T-cell (primary cell): ENCODE measurements at regions of chr11 and their contacts with region 1.

Region 1: GRCh38 chr11:10878408-10879214 is 20.8 kb upstream of the ZBED5 start:
- DNase-seq: peak in 13 of 35 experiments; percentile 3 to 77 (median 21)
- ATAC-seq: peak; percentile 74 to 81 (median 78)
- H3K4me3 ChIP-seq: no peak overlapping the region
- H3K4me3 Mint-ChIP-seq: no peak overlapping the region
- H3K27ac ChIP-seq: no peak overlapping the region
- H3K27ac Mint-ChIP-seq: peak overlapping the region; percentile 77 to 82
- H3K4me1 ChIP-seq: peaks cover 4 to 6% of the 10 kb centered on the region in 2 experiments
- H3K4me1 Mint-ChIP-seq: peaks cover 12 to 32% (median 20%) of the 10 kb centered on the region in 3 donors
- H3K27me3 ChIP-seq: no peaks in the 10 kb centered on the region
- H3K27me3 Mint-ChIP-seq: no peaks in the 10 kb centered on the region

Region 2: DNA sequence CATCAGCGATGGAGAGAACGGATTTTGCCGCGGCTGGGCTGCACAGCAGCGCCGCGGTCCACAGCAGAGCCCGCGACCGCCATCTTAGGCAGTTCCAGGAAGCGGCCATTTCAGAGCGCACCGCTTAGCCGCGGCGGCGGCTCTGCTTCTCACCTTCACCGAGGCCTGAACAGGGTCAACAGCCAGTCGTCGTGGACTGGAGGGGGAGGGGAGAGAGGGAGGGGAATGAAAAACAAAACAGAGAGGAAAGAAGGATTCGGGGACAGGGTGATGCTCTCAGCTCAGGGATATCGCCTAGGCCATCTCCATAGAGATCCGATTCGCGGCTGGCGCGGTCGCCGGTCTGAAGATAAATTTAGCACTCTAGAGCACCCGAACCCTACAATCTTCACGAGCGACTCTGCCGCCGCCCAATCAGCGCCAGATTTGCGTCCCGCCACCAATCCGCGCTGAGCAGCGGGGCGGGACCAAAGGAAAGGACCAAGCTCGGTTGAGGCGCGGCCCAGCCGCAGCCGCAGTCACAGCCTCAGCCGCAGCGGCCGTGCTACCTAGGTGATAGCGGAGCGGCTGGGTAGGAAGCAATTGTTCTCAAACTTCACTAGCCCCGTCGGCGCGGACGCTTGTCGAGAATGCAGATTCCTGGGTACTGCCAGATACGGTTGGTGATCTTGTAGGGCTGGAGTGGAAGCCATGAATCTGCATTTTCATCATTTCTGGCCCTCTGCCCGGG is 20.7 kb before region 1 on chr11 and contains the start of gene ZBED5:
- CTCF ChIA-PET with region 1: interaction called in 1 of 2 experiments, 18 read pairs
- POLR2A ChIA-PET with region 1: no interaction called
- DNase-seq: peak; percentile 91 to 98 (median 94)
- ATAC-seq: peak; percentile 90 to 92 (median 91)
- H3K4me3 ChIP-seq: peak within 1 kb of the TSS; percentile 93 to 97
- H3K4me3 Mint-ChIP-seq: peak within 1 kb of the TSS; percentile 98 to 100 (median 100)
- H3K27ac ChIP-seq: peak within 1 kb of the TSS; percentile 95
- H3K27ac Mint-ChIP-seq: peak within 1 kb of the TSS; percentile 100
- H3K4me1 ChIP-seq: peaks cover 13 to 21% of the 10 kb centered on the region in 2 experiments
- H3K4me1 Mint-ChIP-seq: peaks cover 50 to 59% (median 52%) of the 10 kb centered on the region in 3 donors
- H3K27me3 ChIP-seq: no peaks in the 10 kb centered on the region
- H3K27me3 Mint-ChIP-seq: no peaks in the 10 kb centered on the region
- total RNA-seq, gene ZBED5: 70.1 to 112 (median 106) TPM

Region 3: DNA sequence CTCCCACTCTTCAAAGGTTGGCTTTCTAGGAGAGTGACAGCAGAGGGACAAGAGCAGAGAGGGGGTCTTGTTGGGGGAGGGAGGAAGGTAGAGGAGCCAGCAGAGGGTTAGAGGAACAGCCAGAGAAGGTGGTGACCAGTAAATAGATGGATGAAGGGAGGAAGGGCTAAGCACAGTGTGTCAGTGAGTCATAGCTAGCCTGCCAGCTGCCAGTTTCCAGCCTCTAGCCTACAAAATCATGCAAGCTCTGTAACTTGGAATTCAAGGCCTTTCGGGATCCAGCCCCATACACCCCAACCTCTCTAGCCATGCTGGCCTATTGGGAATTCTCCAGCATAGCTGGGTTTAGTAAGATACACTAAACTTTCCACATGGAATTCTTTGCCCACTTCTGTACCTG is 1648.2 kb after region 1 on chr11:
- CTCF ChIA-PET with region 1: no interaction called
- POLR2A ChIA-PET with region 1: no interaction called
- DNase-seq: no peak
- ATAC-seq: no peak
- H3K4me3 ChIP-seq: no peak overlapping the region
- H3K4me3 Mint-ChIP-seq: no peak overlapping the region
- H3K27ac ChIP-seq: no peak overlapping the region
- H3K27ac Mint-ChIP-seq: no peak overlapping the region
- H3K4me1 ChIP-seq: no peaks in the 10 kb centered on the region
- H3K4me1 Mint-ChIP-seq: no peaks in the 10 kb centered on the region
- H3K27me3 ChIP-seq: no peaks in the 10 kb centered on the region
- H3K27me3 Mint-ChIP-seq: no peaks in the 10 kb centered on the region